CD8-positive, alpha-beta T cell (primary cell): ENCODE measurements at regions of chr16 and their contacts with region 1.

Region 1: GRCh38 chr16:76748461-76749348 is 442.3 kb upstream of the MON1B start:
- DNase-seq: no peak
- ATAC-seq: no peak
- H3K4me3 ChIP-seq: no peak overlapping the region
- H3K4me3 Mint-ChIP-seq: no peak overlapping the region
- H3K27ac ChIP-seq: no peak overlapping the region
- H3K27ac Mint-ChIP-seq: no peak overlapping the region
- H3K4me1 ChIP-seq: no peaks in the 10 kb centered on the region
- H3K4me1 Mint-ChIP-seq: no peaks in the 10 kb centered on the region
- H3K27me3 ChIP-seq: no peaks in the 10 kb centered on the region
- H3K27me3 Mint-ChIP-seq: no peaks in the 10 kb centered on the region
- CTCF ChIP-seq: no peak

Region 2: DNA sequence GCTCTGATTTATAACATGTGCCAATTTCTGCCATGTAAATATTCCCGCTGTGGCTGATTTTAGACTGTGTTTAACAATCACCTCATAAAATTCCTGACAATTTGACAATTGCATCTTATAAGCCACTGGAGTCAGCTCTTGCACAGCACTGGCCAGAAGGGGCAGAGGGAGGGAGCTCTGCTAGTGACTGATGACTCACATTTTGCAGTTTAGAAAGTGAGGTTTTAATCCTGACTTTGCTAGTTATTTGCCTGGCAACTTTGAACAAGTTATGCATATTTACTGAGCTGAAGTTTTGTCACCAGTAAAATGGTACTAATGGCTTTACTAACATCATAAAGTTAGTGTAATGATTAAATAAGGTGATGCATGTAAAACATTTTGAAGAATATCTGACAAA is 19.2 kb before region 1 on chr16:
- CTCF ChIA-PET with region 1: no interaction called
- POLR2A ChIA-PET with region 1: no interaction called
- intact Hi-C with region 1: no loop called
- DNase-seq: no peak
- ATAC-seq: no peak
- H3K4me3 ChIP-seq: no peak overlapping the region
- H3K4me3 Mint-ChIP-seq: no peak overlapping the region
- H3K27ac ChIP-seq: no peak overlapping the region
- H3K27ac Mint-ChIP-seq: no peak overlapping the region
- H3K4me1 ChIP-seq: no peaks in the 10 kb centered on the region
- H3K4me1 Mint-ChIP-seq: no peaks in the 10 kb centered on the region
- H3K27me3 ChIP-seq: no peaks in the 10 kb centered on the region
- H3K27me3 Mint-ChIP-seq: no peaks in the 10 kb centered on the region
- CTCF ChIP-seq: no peak

Region 3: DNA sequence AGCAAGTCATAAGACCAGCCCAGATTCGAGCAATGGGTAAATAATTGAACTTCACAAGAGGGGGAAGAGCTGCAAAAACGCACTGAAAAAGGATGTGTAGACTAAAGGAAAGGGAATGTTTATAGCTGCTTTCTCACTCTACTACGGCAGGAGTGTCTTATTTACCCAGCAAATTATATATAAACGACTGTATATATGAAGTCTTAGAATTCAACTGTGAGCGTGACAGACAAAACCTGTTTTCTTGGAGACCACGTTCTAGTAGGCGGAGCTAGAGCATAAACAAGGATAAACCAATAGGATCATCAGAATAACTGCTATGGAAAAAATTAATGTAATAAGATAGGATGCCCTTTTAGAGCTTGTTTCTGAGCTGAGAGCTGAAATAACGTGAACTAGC is 47.7 kb after region 1 on chr16:
- CTCF ChIA-PET with region 1: no interaction called
- POLR2A ChIA-PET with region 1: no interaction called
- intact Hi-C with region 1: loop called in 1 of 2 experiments (anchors 10 kb)
- DNase-seq: no peak
- ATAC-seq: no peak
- H3K4me3 ChIP-seq: no peak overlapping the region
- H3K4me3 Mint-ChIP-seq: no peak overlapping the region
- H3K27ac ChIP-seq: no peak overlapping the region
- H3K27ac Mint-ChIP-seq: no peak overlapping the region
- H3K4me1 ChIP-seq: no peaks in the 10 kb centered on the region
- H3K4me1 Mint-ChIP-seq: no peaks in the 10 kb centered on the region
- H3K27me3 ChIP-seq: no peaks in the 10 kb centered on the region
- H3K27me3 Mint-ChIP-seq: no peaks in the 10 kb centered on the region
- CTCF ChIP-seq: no peak